Panc1 (cell line): ENCODE measurements at regions of chr18 and their contacts with region 1.

Region 1: GRCh38 chr18:13756261-13756660 is 29.8 kb downstream of the RNMT start:
- DNase-seq: no peak
- ATAC-seq: no peak
- H3K4me3 ChIP-seq: no peak overlapping the region
- H3K27ac ChIP-seq: no peak overlapping the region
- H3K4me1 ChIP-seq: no peaks in the 10 kb centered on the region
- H3K27me3 ChIP-seq: no peaks in the 10 kb centered on the region
- CTCF ChIP-seq: no peak

Region 2: GRCh38 chr18:13680612-13681011 is 75.6 kb before region 1 on chr18:
- CTCF ChIA-PET with region 1: no interaction called
- POLR2A ChIA-PET with region 1: no interaction called
- in situ Hi-C with region 1: no loop called
- intact Hi-C with region 1: no loop called
- DNase-seq: no peak
- ATAC-seq: peak; percentile 75; the same call in 1 of the 2 replicates
- H3K4me3 ChIP-seq: no peak overlapping the region
- H3K27ac ChIP-seq: no peak overlapping the region
- H3K4me1 ChIP-seq: no peaks in the 10 kb centered on the region
- H3K27me3 ChIP-seq: no peaks in the 10 kb centered on the region
- CTCF ChIP-seq: peak; percentile 76

Region 3: DNA sequence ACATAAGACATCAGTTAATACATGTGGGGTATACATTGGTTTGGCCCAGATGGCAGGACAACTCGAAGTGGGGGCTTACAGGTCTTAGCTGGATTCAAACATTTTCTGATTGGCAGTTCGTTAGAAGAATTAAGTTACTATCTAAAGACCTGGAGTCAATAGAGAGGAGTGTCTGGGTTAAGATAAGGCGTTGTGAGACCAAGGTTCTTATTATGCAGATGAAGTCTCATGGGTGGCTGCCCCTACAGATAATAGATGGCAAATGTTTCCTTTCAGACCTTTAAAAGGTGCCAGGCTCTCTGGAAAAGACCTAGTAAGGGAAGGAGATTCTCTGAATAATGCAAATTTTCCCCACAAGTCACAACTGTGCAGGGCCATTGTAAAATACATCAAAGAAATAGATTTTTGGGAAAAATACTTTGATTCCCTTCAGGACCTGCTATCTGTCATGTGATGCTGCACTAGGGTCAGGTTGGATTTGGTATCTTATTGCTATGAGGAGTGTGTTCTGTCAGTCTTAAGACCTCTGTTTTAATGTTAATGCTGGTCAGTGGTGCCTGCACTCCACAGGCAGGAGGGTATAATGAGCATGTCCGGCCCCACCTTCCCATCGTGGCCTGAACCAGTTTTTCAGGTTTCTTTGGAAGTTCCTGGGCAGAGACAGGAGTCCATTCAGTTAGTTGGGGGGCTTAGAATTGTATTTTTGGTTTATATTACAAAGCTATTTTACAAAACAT is 53.4 kb after region 1 on chr18:
- CTCF ChIA-PET with region 1: no interaction called
- POLR2A ChIA-PET with region 1: no interaction called
- in situ Hi-C with region 1: no loop called
- intact Hi-C with region 1: loop called (anchors 5 kb)
- DNase-seq: no peak
- ATAC-seq: no peak
- H3K4me3 ChIP-seq: no peak overlapping the region
- H3K27ac ChIP-seq: no peak overlapping the region
- H3K4me1 ChIP-seq: no peaks in the 10 kb centered on the region
- H3K27me3 ChIP-seq: no peaks in the 10 kb centered on the region; the same call in none of the 2 replicates
- CTCF ChIP-seq: no peak